CD8-positive, alpha-beta T cell (primary cell): ENCODE measurements at regions of chr2 and their contacts with region 1.

Region 1: GRCh38 chr2:71923887-71924533 is 223.7 kb downstream of the CYP26B1 start:
- DNase-seq: peak in 7 of 9 experiments; percentile 11 to 68 (median 48)
- ATAC-seq: no peak
- H3K4me3 ChIP-seq: no peak overlapping the region
- H3K4me3 Mint-ChIP-seq: no peak overlapping the region
- H3K27ac ChIP-seq: no peak overlapping the region
- H3K27ac Mint-ChIP-seq: no peak overlapping the region
- H3K4me1 ChIP-seq: no peaks in the 10 kb centered on the region
- H3K4me1 Mint-ChIP-seq: no peaks in the 10 kb centered on the region
- H3K27me3 ChIP-seq: no peaks in the 10 kb centered on the region
- H3K27me3 Mint-ChIP-seq: peaks cover 2% of the 10 kb centered on the region
- CTCF ChIP-seq: peak; percentile 67

Region 2: GRCh38 chr2:71910277-71910676 is 13.7 kb before region 1 on chr2:
- CTCF ChIA-PET with region 1: interaction called, 12 read pairs
- POLR2A ChIA-PET with region 1: no interaction called
- intact Hi-C with region 1: no loop called
- DNase-seq: peak in 2 of 9 experiments; percentile 1 to 2
- ATAC-seq: no peak
- H3K4me3 ChIP-seq: no peak overlapping the region
- H3K4me3 Mint-ChIP-seq: no peak overlapping the region
- H3K27ac ChIP-seq: no peak overlapping the region
- H3K27ac Mint-ChIP-seq: no peak overlapping the region
- H3K4me1 ChIP-seq: no peaks in the 10 kb centered on the region
- H3K4me1 Mint-ChIP-seq: no peaks in the 10 kb centered on the region
- H3K27me3 ChIP-seq: peaks cover 0 to 4% of the 10 kb centered on the region in 2 experiments
- H3K27me3 Mint-ChIP-seq: peaks cover 24% of the 10 kb centered on the region
- CTCF ChIP-seq: no peak

Region 3: GRCh38 chr2:72150157-72150865 is 226.3 kb after region 1 on chr2:
- CTCF ChIA-PET with region 1: interaction called, 8 read pairs
- POLR2A ChIA-PET with region 1: no interaction called
- intact Hi-C with region 1: loop called in 1 of 2 experiments (anchors 1 kb)
- DNase-seq: peak; percentile 20 to 73 (median 58)
- ATAC-seq: peak; percentile 70
- H3K4me3 ChIP-seq: peak overlapping the region; percentile 31 to 51
- H3K4me3 Mint-ChIP-seq: peak overlapping the region; percentile 79
- H3K27ac ChIP-seq: no peak overlapping the region
- H3K27ac Mint-ChIP-seq: no peak overlapping the region
- H3K4me1 ChIP-seq: peaks cover 39% of the 10 kb centered on the region
- H3K4me1 Mint-ChIP-seq: peaks cover 35% of the 10 kb centered on the region
- H3K27me3 ChIP-seq: peaks cover 31 to 39% of the 10 kb centered on the region in 2 experiments
- H3K27me3 Mint-ChIP-seq: peaks cover 64% of the 10 kb centered on the region
- CTCF ChIP-seq: peak; percentile 74

Region 4: DNA sequence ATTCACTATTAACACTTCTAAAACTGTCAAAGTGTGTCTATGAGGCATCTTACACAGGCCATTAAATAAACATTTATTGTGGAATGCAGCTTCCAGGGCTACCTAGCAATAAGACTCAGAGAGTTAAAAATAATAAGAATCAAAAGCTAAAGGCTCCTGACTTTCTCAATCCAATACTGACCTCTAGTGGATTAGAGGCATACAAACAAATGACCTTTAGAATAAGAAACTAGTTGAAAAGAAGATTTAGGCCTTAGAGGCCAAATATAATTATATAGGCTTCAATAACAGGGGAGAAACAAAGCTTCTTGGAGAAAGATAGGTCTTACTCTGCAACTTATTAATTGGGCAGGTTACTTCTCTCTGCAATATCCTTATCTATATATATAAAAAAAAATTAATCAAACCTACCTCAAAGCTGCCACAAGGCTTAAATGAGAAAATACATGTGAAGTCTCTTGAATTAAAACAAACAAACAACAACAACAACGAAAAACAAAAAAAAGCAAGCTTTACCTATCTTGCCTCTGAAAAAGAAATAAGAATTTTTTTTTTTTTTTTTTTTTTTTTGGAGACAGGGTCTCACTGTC is 655.7 kb after region 1 on chr2:
- CTCF ChIA-PET with region 1: interaction called, 29 read pairs
- POLR2A ChIA-PET with region 1: no interaction called
- intact Hi-C with region 1: loop called (anchors 1 kb)
- DNase-seq: peak in 2 of 9 experiments; percentile 20 to 35
- ATAC-seq: no peak
- H3K4me3 ChIP-seq: no peak overlapping the region
- H3K4me3 Mint-ChIP-seq: no peak overlapping the region
- H3K27ac ChIP-seq: no peak overlapping the region
- H3K27ac Mint-ChIP-seq: no peak overlapping the region
- H3K4me1 ChIP-seq: no peaks in the 10 kb centered on the region
- H3K4me1 Mint-ChIP-seq: peaks cover 6% of the 10 kb centered on the region
- H3K27me3 ChIP-seq: no peaks in the 10 kb centered on the region
- H3K27me3 Mint-ChIP-seq: no peaks in the 10 kb centered on the region
- CTCF ChIP-seq: peak; percentile 47

Region 5: GRCh38 chr2:72745679-72746368 is 821.8 kb after region 1 on chr2:
- CTCF ChIA-PET with region 1: interaction called, 20 read pairs
- POLR2A ChIA-PET with region 1: no interaction called
- intact Hi-C with region 1: loop called (anchors 2 to 5 kb)
- DNase-seq: peak in 2 of 9 experiments; percentile 45 to 55
- ATAC-seq: no peak
- H3K4me3 ChIP-seq: no peak overlapping the region
- H3K4me3 Mint-ChIP-seq: no peak overlapping the region
- H3K27ac ChIP-seq: no peak overlapping the region
- H3K27ac Mint-ChIP-seq: no peak overlapping the region
- H3K4me1 ChIP-seq: no peaks in the 10 kb centered on the region
- H3K4me1 Mint-ChIP-seq: no peaks in the 10 kb centered on the region
- H3K27me3 ChIP-seq: no peaks in the 10 kb centered on the region
- H3K27me3 Mint-ChIP-seq: no peaks in the 10 kb centered on the region
- CTCF ChIP-seq: peak; percentile 59